Ovary (tissue), 10 donors: ENCODE measurements at regions of chr10 and their contacts with region 1.

Region 1: DNA sequence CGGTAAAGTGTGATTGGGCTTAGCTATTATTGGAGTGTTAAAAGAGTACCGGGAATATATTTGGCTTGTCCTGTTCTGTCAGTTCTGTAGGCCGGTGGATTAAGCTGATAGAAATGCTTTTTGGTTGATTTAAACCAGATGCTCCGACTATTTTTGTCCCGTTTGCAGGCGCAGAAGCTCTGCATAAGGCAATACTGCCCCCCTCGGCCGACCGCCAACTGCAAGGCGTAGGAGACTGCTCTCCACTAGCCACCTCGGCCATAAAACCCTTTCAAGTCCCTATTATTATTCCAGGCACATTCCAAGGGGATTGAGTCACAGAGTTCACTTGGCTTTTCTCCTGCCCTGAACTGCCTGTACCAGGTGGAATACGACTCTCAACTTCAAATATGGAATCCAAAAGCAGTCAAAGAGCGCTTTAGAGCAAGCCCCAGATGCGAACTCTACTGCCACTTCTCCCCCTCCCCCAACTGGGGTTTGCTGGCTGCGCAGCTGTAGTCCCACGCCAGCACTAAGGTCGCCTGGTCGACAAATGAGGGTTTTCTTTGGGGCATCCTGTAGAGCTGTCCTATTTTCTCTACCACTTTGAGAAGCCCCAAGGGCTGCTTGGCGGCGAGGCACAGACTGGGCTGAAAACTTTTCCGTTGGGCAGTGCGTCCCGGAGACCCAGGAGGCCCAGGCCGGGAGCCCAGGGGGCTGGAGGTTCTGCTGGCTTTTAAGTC is 108.3 kb downstream of the REEP3 start:
- DNase-seq: peak; percentile 93 to 97 (median 97)
- H3K4me3 ChIP-seq: peak overlapping the region; percentile 57
- H3K27ac ChIP-seq: peak overlapping the region; percentile 87 to 92
- H3K4me1 ChIP-seq: peaks cover 7% of the 10 kb centered on the region
- H3K27me3 ChIP-seq: no peaks in the 10 kb centered on the region
- CTCF ChIP-seq: peak; percentile 66 to 76 (median 70)
- EP300 ChIP-seq: no peak
- POLR2A ChIP-seq: no peak

Region 2: GRCh38 chr10:63166742-63167258 is 462.7 kb before region 1 on chr10:
- intact Hi-C with region 1: loop called in 1 of 4 experiments (anchors 10 kb)
- DNase-seq: peak in 1 of 5 donors; percentile 33
- H3K4me3 ChIP-seq: no peak overlapping the region
- H3K27ac ChIP-seq: no peak overlapping the region
- H3K4me1 ChIP-seq: peaks cover 4% of the 10 kb centered on the region
- H3K27me3 ChIP-seq: no peaks in the 10 kb centered on the region
- CTCF ChIP-seq: peak; percentile 69 to 86 (median 74)
- EP300 ChIP-seq: no peak
- POLR2A ChIP-seq: no peak

Region 3: DNA sequence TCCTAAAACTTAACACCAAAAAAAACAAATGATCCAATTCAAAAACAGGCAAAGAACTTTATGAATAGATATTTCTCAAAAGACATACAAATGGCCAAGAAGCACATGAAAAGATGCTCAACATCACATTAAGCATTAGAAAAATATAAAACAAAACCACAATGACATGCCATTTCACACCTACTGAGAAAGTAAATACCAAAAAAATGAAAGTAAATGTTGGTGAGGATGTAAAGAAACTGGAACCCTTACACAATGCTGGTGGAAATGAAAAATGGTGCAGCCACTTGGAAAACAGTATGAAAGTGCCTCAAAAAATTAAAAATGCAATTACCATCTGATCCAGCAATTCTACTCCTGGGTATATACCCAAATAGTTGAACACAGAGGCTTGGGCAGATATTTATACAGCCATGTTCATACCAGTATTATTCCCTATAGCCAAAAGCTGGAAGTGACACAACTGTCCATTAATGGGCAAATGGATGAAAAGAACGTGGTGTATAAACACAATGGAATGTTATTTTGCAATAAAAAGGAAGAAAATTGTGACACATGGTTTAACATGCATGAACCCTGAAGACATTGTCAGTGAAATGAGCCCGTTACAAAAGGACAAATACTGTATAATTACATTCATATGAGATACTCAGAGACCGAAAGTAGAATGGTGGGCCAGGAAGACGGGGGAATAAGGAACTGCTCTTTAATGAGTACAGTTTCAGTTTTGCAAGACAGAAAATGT is 252.8 kb before region 1 on chr10:
- intact Hi-C with region 1: no loop called
- DNase-seq: no peak
- H3K4me3 ChIP-seq: no peak overlapping the region
- H3K27ac ChIP-seq: no peak overlapping the region
- H3K4me1 ChIP-seq: peaks cover 3% of the 10 kb centered on the region
- H3K27me3 ChIP-seq: no peaks in the 10 kb centered on the region
- CTCF ChIP-seq: no peak
- EP300 ChIP-seq: no peak
- POLR2A ChIP-seq: no peak

Region 4: DNA sequence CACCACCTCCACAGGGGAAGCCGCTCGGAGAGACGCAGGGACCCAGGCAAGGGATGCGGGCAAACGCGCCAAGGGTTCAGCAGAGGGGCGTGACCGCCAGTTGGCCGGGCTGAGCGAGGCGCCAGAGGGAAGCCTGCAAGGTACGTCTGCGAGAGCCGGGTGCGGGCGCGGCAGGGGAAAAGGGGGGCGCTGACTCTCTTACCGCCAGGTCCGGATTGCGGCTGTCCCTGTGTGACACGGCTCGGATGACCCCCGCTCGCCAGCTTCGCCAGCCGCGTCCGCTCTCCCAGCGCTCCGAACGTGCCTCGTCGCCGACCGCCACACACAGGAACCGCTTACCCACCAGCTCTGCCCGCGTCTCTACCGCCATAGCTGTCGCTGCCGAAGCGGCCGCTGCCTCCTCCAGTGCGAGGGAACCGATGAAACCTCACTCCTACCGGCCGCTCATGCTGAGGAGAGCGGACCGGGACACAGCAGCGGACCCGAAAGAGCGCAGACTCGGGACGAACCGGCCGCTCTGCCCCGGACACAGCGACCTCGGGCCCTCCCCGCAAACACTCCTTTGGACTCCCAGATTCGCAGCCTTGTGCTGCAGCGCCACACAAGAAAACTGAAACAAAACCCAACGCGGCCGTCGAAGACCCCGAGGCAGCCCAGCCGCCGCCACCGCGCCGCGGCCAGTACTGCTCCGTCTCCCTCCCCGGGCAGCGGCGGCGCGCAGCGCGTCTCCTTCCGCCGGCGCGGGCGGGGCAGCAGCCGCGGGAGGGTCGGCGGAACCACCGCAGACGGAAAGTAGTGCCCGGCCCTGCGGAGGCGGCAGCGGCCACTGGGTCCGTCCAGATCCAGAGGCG is 164.0 kb before region 1 on chr10 and contains the start of gene JMJD1C:
- intact Hi-C with region 1: loop called in 1 of 4 experiments (anchors 5 kb)
- DNase-seq: peak; percentile 82 to 90 (median 85)
- H3K4me3 ChIP-seq: peak within 1 kb of the TSS; percentile 66
- H3K27ac ChIP-seq: peak within 1 kb of the TSS; percentile 92 to 95
- H3K4me1 ChIP-seq: no peaks in the 10 kb centered on the region
- H3K27me3 ChIP-seq: no peaks in the 10 kb centered on the region
- CTCF ChIP-seq: peak in 2 of 3 donors; percentile 20 to 34
- EP300 ChIP-seq: no peak
- POLR2A ChIP-seq: peak; percentile 76
- total RNA-seq, gene JMJD1C: 70.9 to 140 (median 80.1) TPM

Region 5: DNA sequence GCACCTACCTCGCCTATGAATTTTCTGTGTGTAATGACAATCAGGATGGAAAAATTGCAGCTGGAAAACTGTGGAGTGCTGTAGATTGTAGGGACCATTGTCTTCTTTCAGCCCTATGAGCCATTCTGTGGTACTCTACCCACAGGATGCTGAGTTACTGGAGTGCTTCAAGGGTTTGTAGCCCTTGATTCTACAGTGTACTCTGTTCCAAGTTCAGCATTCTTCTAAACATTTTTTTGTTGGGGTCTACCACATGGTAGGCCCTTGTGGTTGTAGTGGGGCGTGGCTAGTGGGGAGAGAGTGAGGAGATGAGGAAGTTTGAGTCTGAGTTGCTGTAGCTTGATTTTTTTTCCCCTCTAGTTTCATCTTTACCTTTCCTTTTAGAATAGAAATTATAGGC is 74.9 kb before region 1 on chr10:
- intact Hi-C with region 1: no loop called
- DNase-seq: no peak
- H3K4me3 ChIP-seq: no peak overlapping the region
- H3K27ac ChIP-seq: no peak overlapping the region
- H3K4me1 ChIP-seq: peaks cover 2% of the 10 kb centered on the region
- H3K27me3 ChIP-seq: no peaks in the 10 kb centered on the region
- CTCF ChIP-seq: no peak
- EP300 ChIP-seq: no peak
- POLR2A ChIP-seq: no peak

Region 6: DNA sequence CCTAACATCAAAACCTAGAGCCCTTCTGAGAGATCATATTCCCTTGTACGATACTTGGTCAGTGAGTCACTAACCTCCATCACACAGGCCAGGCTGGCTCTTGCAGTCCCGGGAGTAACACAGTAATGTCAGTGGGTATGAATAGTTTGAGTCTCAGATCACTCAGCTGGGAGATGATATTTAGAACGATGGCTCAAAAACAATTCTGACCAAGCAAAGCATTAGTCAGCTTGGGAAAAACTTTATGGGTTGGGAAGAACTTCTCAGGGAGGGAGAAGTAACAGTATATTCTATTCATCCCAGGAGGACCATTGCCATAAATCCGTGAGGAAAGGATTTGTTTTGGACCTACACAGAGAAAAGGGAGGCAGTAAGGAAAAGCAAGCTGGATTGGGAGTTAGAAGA is 70.7 kb after region 1 on chr10:
- intact Hi-C with region 1: loop called in 2 of 4 experiments (anchors 5 kb)
- DNase-seq: peak in 1 of 5 donors; percentile 48
- H3K4me3 ChIP-seq: no peak overlapping the region
- H3K27ac ChIP-seq: peak overlapping the region in 1 of 2 donors; percentile 24
- H3K4me1 ChIP-seq: peaks cover 3% of the 10 kb centered on the region
- H3K27me3 ChIP-seq: no peaks in the 10 kb centered on the region
- CTCF ChIP-seq: no peak
- EP300 ChIP-seq: no peak
- POLR2A ChIP-seq: no peak

Region 7: GRCh38 chr10:63720072-63720537 is 90.6 kb after region 1 on chr10:
- intact Hi-C with region 1: loop called in 1 of 4 experiments (anchors 5 kb)
- DNase-seq: peak in 1 of 5 donors; percentile 60
- H3K4me3 ChIP-seq: no peak overlapping the region
- H3K27ac ChIP-seq: no peak overlapping the region
- H3K4me1 ChIP-seq: no peaks in the 10 kb centered on the region
- H3K27me3 ChIP-seq: no peaks in the 10 kb centered on the region
- CTCF ChIP-seq: peak; percentile 81 to 95 (median 92)
- EP300 ChIP-seq: no peak
- POLR2A ChIP-seq: no peak